ENCODE measurements at regions of chrX and their contacts with region 1.

Region 1: GRCh38 chrX:119488749-119489148 is 20.5 kb downstream of the SLC25A5 start:
- DNase-seq: peak in 2 of 3 donors; percentile 49 to 56
- H3K4me3 ChIP-seq: no peak overlapping the region
- H3K27ac ChIP-seq: no peak overlapping the region
- H3K4me1 ChIP-seq: no peaks in the 10 kb centered on the region
- H3K27me3 ChIP-seq: no peaks in the 10 kb centered on the region

Region 2: DNA sequence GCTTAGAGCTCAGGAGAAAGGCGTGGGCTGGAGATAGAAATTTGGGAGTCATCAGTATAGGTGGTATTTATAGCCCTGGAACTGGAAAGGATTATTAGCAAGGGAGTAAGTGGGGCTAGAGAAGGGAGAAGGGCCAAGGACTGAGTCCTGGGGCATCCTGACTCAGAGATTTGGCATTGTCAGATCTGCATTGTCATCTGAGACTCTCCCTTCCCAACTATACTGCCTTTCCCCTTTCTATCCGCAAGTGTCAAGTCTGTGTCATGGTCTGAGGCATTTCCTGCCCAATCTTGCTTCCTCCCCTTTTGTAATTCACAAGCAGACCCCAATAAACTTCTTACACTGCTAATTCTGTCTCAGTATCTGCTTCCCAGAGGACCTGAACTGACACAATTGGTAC is 114.0 kb before region 1 on chrX:
- CTCF ChIA-PET with region 1: no interaction called
- POLR2A ChIA-PET with region 1: no interaction called
- DNase-seq: no peak
- H3K4me3 ChIP-seq: no peak overlapping the region
- H3K27ac ChIP-seq: no peak overlapping the region
- H3K4me1 ChIP-seq: no peaks in the 10 kb centered on the region
- H3K27me3 ChIP-seq: no peaks in the 10 kb centered on the region

Region 3: GRCh38 chrX:119502727-119503483 is 14.2 kb after region 1 on chrX:
- CTCF ChIA-PET with region 1: interaction called, 15 read pairs
- POLR2A ChIA-PET with region 1: no interaction called
- DNase-seq: peak in 2 of 3 donors; percentile 21 to 50
- H3K4me3 ChIP-seq: no peak overlapping the region
- H3K27ac ChIP-seq: no peak overlapping the region
- H3K4me1 ChIP-seq: peaks cover 0 to 20% (median 2%) of the 10 kb centered on the region in 4 experiments
- H3K27me3 ChIP-seq: no peaks in the 10 kb centered on the region

Region 4: GRCh38 chrX:119512146-119512800 is 23.5 kb after region 1 on chrX:
- CTCF ChIA-PET with region 1: interaction called, 56 read pairs
- POLR2A ChIA-PET with region 1: no interaction called
- DNase-seq: peak; percentile 55 to 76 (median 73)
- H3K4me3 ChIP-seq: no peak overlapping the region
- H3K27ac ChIP-seq: no peak overlapping the region
- H3K4me1 ChIP-seq: no peaks in the 10 kb centered on the region
- H3K27me3 ChIP-seq: no peaks in the 10 kb centered on the region

Measured in common myeloid progenitor, CD34-positive (primary cell).